ENCODE measurements at regions of chr10 and their contacts with region 1.

Region 1: GRCh38 chr10:6014241-6014761 is 37.0 kb upstream of the IL15RA start:
- DNase-seq: no peak
- H3K4me3 ChIP-seq: no peak overlapping the region
- CTCF ChIP-seq: peak; percentile 56

Region 2: GRCh38 chr10:5977471-5978229 is 36.7 kb before region 1 on chr10 and contains the start of gene IL15RA:
- CTCF ChIA-PET with region 1: interaction called, 13 read pairs
- POLR2A ChIA-PET with region 1: no interaction called
- DNase-seq: no peak
- H3K4me3 ChIP-seq: peak within 1 kb of the TSS; percentile 72
- CTCF ChIP-seq: no peak

Region 3: DNA sequence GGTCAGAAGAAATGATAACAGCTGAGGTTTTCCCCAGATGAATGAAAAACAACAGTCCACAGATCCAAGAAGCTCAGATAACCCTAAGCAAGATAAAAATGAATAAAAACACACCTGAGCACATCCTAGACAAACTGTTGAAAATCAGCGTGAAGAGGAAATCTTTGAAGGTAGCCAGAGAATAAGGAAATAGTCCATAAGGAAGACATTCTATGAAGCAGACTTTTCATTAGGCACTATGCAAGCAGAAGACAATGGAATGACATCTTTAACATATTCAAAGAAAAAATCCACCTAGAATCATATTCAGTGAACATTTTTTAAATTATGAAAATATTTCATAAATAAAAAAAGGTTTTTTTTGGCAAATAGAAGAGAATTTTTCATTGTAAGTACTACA is 21.9 kb before region 1 on chr10:
- CTCF ChIA-PET with region 1: interaction called, 17 read pairs
- POLR2A ChIA-PET with region 1: no interaction called
- DNase-seq: no peak
- H3K4me3 ChIP-seq: no peak overlapping the region
- CTCF ChIP-seq: no peak

Region 4: GRCh38 chr10:6033954-6034353 is 19.7 kb after region 1 on chr10:
- CTCF ChIA-PET with region 1: interaction called, 11 read pairs
- POLR2A ChIA-PET with region 1: no interaction called
- DNase-seq: no peak
- H3K4me3 ChIP-seq: no peak overlapping the region
- CTCF ChIP-seq: no peak

Region 5: GRCh38 chr10:6409971-6410651 is 395.8 kb after region 1 on chr10:
- CTCF ChIA-PET with region 1: interaction called, 27 read pairs
- POLR2A ChIA-PET with region 1: no interaction called
- DNase-seq: no peak
- H3K4me3 ChIP-seq: no peak overlapping the region
- CTCF ChIP-seq: no peak

Region 6: GRCh38 chr10:6530211-6530840 is 516.0 kb after region 1 on chr10:
- CTCF ChIA-PET with region 1: no interaction called
- POLR2A ChIA-PET with region 1: no interaction called
- DNase-seq: no peak
- H3K4me3 ChIP-seq: no peak overlapping the region
- CTCF ChIP-seq: no peak

Region 7: GRCh38 chr10:6593241-6593671 is 579.0 kb after region 1 on chr10:
- CTCF ChIA-PET with region 1: no interaction called
- POLR2A ChIA-PET with region 1: no interaction called
- DNase-seq: no peak
- H3K4me3 ChIP-seq: no peak overlapping the region
- CTCF ChIP-seq: no peak

Measured in AG04449 (cell line).